Astrocyte of the cerebellum (primary cell): ENCODE measurements at regions of chr9 and their contacts with region 1.

Region 1: GRCh38 chr9:93945400-93946337 is 9.5 kb downstream of the BARX1 start:
- DNase-seq: no peak
- H3K4me3 ChIP-seq: no peak overlapping the region
- CTCF ChIP-seq: no peak

Region 2: GRCh38 chr9:93635186-93636111 is 310.2 kb before region 1 on chr9:
- in situ Hi-C with region 1: no loop called
- DNase-seq: no peak
- H3K4me3 ChIP-seq: no peak overlapping the region
- CTCF ChIP-seq: no peak

Region 3: GRCh38 chr9:93682232-93682968 is 263.3 kb before region 1 on chr9:
- in situ Hi-C with region 1: loop called (anchors 10 kb)
- DNase-seq: peak; percentile 5
- H3K4me3 ChIP-seq: no peak overlapping the region
- CTCF ChIP-seq: peak; percentile 89

Region 4: DNA sequence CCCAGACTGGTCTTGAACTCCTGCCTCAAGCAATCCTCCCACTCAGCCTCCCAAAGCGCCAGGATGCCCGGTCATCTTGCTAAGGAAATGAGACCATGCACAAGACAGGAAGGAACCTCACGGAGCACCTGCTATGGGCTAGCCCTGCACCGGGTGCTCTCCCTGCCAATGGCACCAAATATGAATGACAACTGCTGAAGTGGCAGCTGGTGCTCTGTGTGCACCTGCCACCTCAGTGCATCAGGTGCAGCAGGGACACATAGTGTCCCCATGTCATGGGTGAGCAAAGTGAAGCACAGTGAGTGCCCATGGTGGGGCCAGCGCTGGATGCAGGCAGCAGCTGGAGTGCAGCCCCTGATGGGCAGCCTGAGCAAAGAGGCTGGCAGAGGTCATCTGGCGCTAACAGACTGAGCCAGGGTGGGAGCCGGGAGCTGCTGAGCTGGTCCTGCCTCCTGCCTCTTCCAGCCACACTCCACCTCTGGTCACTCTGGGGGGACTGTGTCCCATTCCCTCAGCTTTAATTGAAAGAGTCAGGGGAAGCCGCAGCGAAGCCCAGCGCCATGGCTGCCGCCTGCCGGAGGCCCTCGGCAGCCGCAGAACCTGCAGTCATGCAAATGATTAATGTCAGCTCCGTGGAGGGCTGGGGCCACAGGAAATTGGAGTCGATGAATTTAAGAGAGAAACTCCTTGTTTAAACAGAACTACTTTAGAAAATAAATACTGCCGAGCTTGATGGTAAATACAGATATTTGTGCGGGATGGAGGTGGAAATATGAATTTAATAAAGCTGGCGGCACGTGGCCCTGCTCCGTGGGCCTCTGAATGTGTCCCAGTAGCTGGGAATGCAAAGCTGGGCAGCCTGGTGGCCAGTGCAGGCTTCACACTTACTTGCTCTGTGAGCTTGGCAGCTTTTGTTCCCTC is 36.8 kb before region 1 on chr9:
- in situ Hi-C with region 1: no loop called
- DNase-seq: no peak
- H3K4me3 ChIP-seq: no peak overlapping the region
- CTCF ChIP-seq: no peak